Heart right ventricle (tissue), 16 donors: ENCODE measurements at regions of chr1 and their contacts with region 1.

Region 1: GRCh38 chr1:33616773-33617172 is 144.3 kb downstream of the ZSCAN20 start:
- DNase-seq: no peak
- ATAC-seq: peak in 1 of 8 donors; percentile 29
- H3K4me3 ChIP-seq: no peak overlapping the region
- H3K27ac ChIP-seq: no peak overlapping the region
- H3K4me1 ChIP-seq: peaks cover 0 to 6% (median 0%) of the 10 kb centered on the region in 9 donors
- H3K27me3 ChIP-seq: peaks cover 0 to 12% (median 4%) of the 10 kb centered on the region in 7 donors
- CTCF ChIP-seq: no peak

Region 2: GRCh38 chr1:33472349-33472980 is 144.3 kb before region 1 on chr1 and contains the start of gene ZSCAN20:
- intact Hi-C with region 1: loop called (anchors 2 to 10 kb)
- DNase-seq: peak; percentile 98 to 99
- ATAC-seq: peak; percentile 89 to 97 (median 94)
- H3K4me3 ChIP-seq: peak within 1 kb of the TSS; percentile 19 to 77 (median 64)
- H3K27ac ChIP-seq: peak within 1 kb of the TSS; percentile 59 to 92 (median 84)
- H3K4me1 ChIP-seq: peaks cover 3 to 65% (median 41%) of the 10 kb centered on the region in 9 donors
- H3K27me3 ChIP-seq: no peaks in the 10 kb centered on the region
- CTCF ChIP-seq: no peak
- total RNA-seq, gene ZSCAN20: 3.4 to 9.3 (median 5.8) TPM

Region 3: DNA sequence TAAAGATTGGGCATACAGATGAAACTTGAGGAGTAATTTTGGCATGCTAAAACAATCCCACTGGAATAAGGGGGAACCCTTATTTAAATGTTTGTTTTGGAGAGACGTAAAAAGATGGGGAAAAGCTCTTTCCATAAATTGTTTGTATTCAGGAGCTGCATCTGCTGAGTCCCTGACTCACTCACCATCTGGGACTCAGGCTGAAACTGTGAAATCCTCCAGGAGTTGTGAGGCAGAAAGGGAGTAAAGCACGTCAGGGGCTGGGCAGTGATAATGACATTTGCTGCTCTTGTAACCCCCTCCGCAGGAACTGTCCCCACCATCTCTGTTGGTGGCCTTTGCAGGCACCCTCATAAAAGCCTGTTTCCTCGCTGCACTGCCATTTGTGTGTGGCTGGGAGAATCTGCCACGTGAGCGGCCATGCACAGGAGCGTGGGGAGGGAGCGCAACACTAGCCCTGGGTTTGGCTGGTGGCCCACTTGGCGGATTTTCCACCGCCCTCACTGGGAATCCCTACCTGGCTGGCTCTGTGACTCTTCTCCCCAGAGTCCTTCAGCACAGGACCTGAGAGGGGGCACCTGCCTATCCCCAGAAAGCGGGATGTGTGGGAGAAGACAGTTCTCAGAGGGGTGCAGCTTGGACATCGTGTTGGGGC is 99.0 kb before region 1 on chr1:
- intact Hi-C with region 1: loop called in 3 of 10 experiments (anchors 5 to 10 kb)
- DNase-seq: no peak
- ATAC-seq: no peak
- H3K4me3 ChIP-seq: no peak overlapping the region
- H3K27ac ChIP-seq: no peak overlapping the region
- H3K4me1 ChIP-seq: peaks cover 0 to 14% (median 0%) of the 10 kb centered on the region in 9 donors
- H3K27me3 ChIP-seq: no peaks in the 10 kb centered on the region
- CTCF ChIP-seq: no peak

Region 4: DNA sequence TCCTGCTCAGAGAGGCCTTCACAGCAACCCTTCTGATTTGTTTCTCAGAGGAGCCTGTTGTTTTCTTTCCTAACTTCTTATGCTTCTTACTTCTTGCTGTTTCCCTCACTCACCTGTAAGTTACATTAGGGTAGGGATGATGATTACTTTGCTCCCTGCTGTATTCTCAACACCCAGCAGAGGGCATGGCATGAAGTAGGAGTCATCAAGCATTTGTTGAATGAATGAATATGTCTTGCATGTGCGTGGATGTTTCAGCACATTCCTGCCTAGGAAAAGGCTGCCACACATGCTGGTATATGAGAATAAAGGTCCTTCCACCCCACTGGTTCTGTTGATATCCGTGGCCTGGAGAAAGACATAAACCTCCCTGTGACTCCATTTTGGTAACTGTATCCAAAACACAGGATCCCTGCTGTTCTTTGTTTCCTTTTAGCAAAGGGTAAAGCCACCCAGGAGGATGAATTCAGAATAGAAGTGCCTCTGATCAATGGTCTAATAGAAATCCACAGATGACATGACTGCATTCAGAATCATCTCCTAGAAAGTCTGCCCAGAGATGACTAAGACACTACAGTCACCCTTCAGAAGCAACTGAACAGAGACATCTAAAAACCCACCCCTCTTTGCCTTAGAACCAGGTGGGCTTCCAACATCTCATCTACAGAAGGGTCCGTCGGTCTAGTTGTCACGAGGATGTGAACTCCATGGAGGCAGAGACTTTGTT is 24.5 kb after region 1 on chr1:
- intact Hi-C with region 1: no loop called
- DNase-seq: no peak
- ATAC-seq: peak in 2 of 8 donors; percentile 24 to 37
- H3K4me3 ChIP-seq: no peak overlapping the region
- H3K27ac ChIP-seq: no peak overlapping the region
- H3K4me1 ChIP-seq: no peaks in the 10 kb centered on the region
- H3K27me3 ChIP-seq: peaks cover 0 to 13% (median 3%) of the 10 kb centered on the region in 7 donors
- CTCF ChIP-seq: peak in 8 of 9 donors; percentile 23 to 53 (median 41)